Activated CD4-positive, alpha-beta T cell treated with anti-CD3 and anti-CD28 coated beads, Interleukin-2, amount 10 ng/mL, durations not matched to agents 24 days and 14 days (primary cell): ENCODE measurements at regions of chr21 and their contacts with region 1.

Region 1: GRCh38 chr21:25509862-25510261 is 97.4 kb downstream of the MRPL39 start:
- DNase-seq: no peak
- H3K4me3 Mint-ChIP-seq: peak overlapping the region; percentile 39
- H3K27ac Mint-ChIP-seq: peak overlapping the region; percentile 81
- H3K4me1 Mint-ChIP-seq: peaks cover 46% of the 10 kb centered on the region
- H3K27me3 Mint-ChIP-seq: no peaks in the 10 kb centered on the region

Region 2: GRCh38 chr21:24163539-24163938 is 1346.3 kb before region 1 on chr21:
- intact Hi-C with region 1: no loop called
- DNase-seq: no peak
- H3K4me3 Mint-ChIP-seq: no peak overlapping the region
- H3K27ac Mint-ChIP-seq: no peak overlapping the region
- H3K4me1 Mint-ChIP-seq: no peaks in the 10 kb centered on the region
- H3K27me3 Mint-ChIP-seq: no peaks in the 10 kb centered on the region

Region 3: GRCh38 chr21:24890021-24890420 is 619.8 kb before region 1 on chr21:
- intact Hi-C with region 1: no loop called
- DNase-seq: no peak
- H3K4me3 Mint-ChIP-seq: no peak overlapping the region
- H3K27ac Mint-ChIP-seq: no peak overlapping the region
- H3K4me1 Mint-ChIP-seq: no peaks in the 10 kb centered on the region
- H3K27me3 Mint-ChIP-seq: no peaks in the 10 kb centered on the region

Region 4: DNA sequence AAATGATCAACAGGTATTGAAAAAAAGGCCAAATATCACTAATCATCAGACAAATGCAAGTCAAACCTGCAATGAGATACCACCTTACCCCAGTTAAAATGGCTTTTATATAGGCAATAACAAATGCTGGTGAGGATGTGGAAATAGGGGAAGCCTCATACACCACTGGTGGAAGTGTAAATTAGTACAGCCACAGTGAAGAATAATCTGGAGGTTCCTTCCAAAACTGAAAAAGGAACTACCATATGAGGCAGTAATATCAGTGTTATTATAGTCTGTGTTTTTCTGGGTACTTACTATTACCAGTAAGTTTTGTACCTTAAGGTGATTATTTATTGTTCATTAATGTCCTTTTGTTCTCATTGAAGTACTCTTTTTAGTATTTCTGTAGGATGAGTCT is 103.9 kb before region 1 on chr21:
- intact Hi-C with region 1: no loop called
- DNase-seq: no peak
- H3K4me3 Mint-ChIP-seq: no peak overlapping the region
- H3K27ac Mint-ChIP-seq: no peak overlapping the region
- H3K4me1 Mint-ChIP-seq: peaks cover 11% of the 10 kb centered on the region
- H3K27me3 Mint-ChIP-seq: no peaks in the 10 kb centered on the region

Region 5: GRCh38 chr21:25464275-25464674 is 45.6 kb before region 1 on chr21:
- intact Hi-C with region 1: loop called (anchors 1 kb)
- DNase-seq: peak; percentile 73
- H3K4me3 Mint-ChIP-seq: peak overlapping the region; percentile 69
- H3K27ac Mint-ChIP-seq: peak overlapping the region; percentile 98
- H3K4me1 Mint-ChIP-seq: peaks cover 48% of the 10 kb centered on the region
- H3K27me3 Mint-ChIP-seq: no peaks in the 10 kb centered on the region

Region 6: GRCh38 chr21:25556091-25556490 is 46.2 kb after region 1 on chr21:
- intact Hi-C with region 1: loop called (anchors 1 kb)
- DNase-seq: no peak
- H3K4me3 Mint-ChIP-seq: no peak overlapping the region
- H3K27ac Mint-ChIP-seq: peak overlapping the region; percentile 49
- H3K4me1 Mint-ChIP-seq: peaks cover 47% of the 10 kb centered on the region
- H3K27me3 Mint-ChIP-seq: no peaks in the 10 kb centered on the region